ENCODE measurements at regions of chr21 and their contacts with region 1.

Region 1: DNA sequence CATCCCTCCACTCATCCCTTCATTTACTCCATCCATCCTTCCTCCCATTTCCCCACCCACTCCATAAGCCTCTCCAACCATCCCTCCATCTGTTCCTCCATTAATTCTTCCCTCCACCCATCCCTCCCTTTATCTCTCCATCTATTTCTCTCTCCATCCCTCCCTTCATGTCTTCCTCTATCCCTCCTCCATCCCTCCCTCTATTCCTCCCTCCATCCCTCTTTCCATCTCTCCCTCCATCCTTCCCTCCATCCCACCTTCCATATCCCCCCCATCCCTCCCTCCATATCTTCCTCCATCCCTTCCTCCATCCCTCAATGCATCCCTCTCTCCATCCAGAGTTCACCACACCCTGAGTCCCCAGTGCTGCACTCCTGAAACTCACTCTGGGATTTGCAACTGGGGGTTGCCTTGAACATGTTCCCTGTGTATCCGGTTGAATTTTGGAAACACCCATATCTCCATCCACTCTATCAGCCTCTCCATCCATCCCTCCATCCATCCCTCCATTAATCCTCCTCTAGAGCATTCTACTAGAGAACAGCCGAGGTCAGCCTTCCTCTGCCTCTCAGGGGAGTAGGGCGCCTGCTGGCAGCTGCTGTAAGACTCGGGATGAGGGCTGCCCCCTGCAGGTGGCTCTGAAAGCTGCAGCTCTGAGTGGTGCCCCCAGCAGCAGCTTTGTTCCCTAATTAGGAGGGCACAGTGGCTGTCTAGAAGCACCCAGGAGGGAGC is 39.4 kb downstream of the ABCG1 start:
- DNase-seq: peak; percentile 77 to 81 (median 78)
- H3K4me3 ChIP-seq: no peak overlapping the region
- H3K4me3 Mint-ChIP-seq: peak overlapping the region in 1 of 8 donors; percentile 37
- H3K27ac ChIP-seq: no peak overlapping the region
- H3K27ac Mint-ChIP-seq: peak overlapping the region in 6 of 7 donors; percentile 10 to 78 (median 48)
- H3K4me1 ChIP-seq: peaks cover 15% of the 10 kb centered on the region
- H3K4me1 Mint-ChIP-seq: peaks cover 19 to 40% (median 30%) of the 10 kb centered on the region in 4 donors
- H3K27me3 ChIP-seq: no peaks in the 10 kb centered on the region
- H3K27me3 Mint-ChIP-seq: no peaks in the 10 kb centered on the region

Region 2: GRCh38 chr21:42145569-42146272 is 112.6 kb before region 1 on chr21:
- CTCF ChIA-PET with region 1: interaction called, 217 read pairs
- POLR2A ChIA-PET with region 1: interaction called, 7 read pairs
- intact Hi-C with region 1: loop called (anchors 1 kb)
- DNase-seq: peak; percentile 67 to 72 (median 70)
- H3K4me3 ChIP-seq: no peak overlapping the region
- H3K4me3 Mint-ChIP-seq: peak overlapping the region in 1 of 8 donors; percentile 13
- H3K27ac ChIP-seq: no peak overlapping the region
- H3K27ac Mint-ChIP-seq: peak overlapping the region; percentile 28 to 89 (median 51)
- H3K4me1 ChIP-seq: peaks cover 4% of the 10 kb centered on the region
- H3K4me1 Mint-ChIP-seq: peaks cover 4 to 7% (median 5%) of the 10 kb centered on the region in 4 donors
- H3K27me3 ChIP-seq: no peaks in the 10 kb centered on the region
- H3K27me3 Mint-ChIP-seq: peaks cover 5 to 7% of the 10 kb centered on the region in 2 donors

Region 3: GRCh38 chr21:42156690-42157577 is 101.4 kb before region 1 on chr21:
- CTCF ChIA-PET with region 1: interaction called, 157 read pairs
- POLR2A ChIA-PET with region 1: no interaction called
- intact Hi-C with region 1: no loop called
- DNase-seq: no peak
- H3K4me3 ChIP-seq: no peak overlapping the region
- H3K4me3 Mint-ChIP-seq: no peak overlapping the region
- H3K27ac ChIP-seq: no peak overlapping the region
- H3K27ac Mint-ChIP-seq: no peak overlapping the region
- H3K4me1 ChIP-seq: peaks cover 7% of the 10 kb centered on the region
- H3K4me1 Mint-ChIP-seq: peaks cover 6 to 14% (median 11%) of the 10 kb centered on the region in 4 donors
- H3K27me3 ChIP-seq: no peaks in the 10 kb centered on the region
- H3K27me3 Mint-ChIP-seq: peaks cover 0 to 4% of the 10 kb centered on the region in 2 donors

Region 4: GRCh38 chr21:42187976-42188653 is 70.2 kb before region 1 on chr21:
- CTCF ChIA-PET with region 1: interaction called, 40 read pairs
- POLR2A ChIA-PET with region 1: interaction called, 6 read pairs
- intact Hi-C with region 1: loop called (anchors 1 kb)
- DNase-seq: peak; percentile 84 to 91 (median 86)
- H3K4me3 ChIP-seq: peak overlapping the region; percentile 2 to 10
- H3K4me3 Mint-ChIP-seq: peak overlapping the region; percentile 74 to 89 (median 79)
- H3K27ac ChIP-seq: peak overlapping the region; percentile 73
- H3K27ac Mint-ChIP-seq: peak overlapping the region; percentile 90 to 99 (median 98)
- H3K4me1 ChIP-seq: peaks cover 92% of the 10 kb centered on the region
- H3K4me1 Mint-ChIP-seq: peaks cover 34 to 74% (median 60%) of the 10 kb centered on the region in 4 donors
- H3K27me3 ChIP-seq: no peaks in the 10 kb centered on the region
- H3K27me3 Mint-ChIP-seq: no peaks in the 10 kb centered on the region

Region 5: DNA sequence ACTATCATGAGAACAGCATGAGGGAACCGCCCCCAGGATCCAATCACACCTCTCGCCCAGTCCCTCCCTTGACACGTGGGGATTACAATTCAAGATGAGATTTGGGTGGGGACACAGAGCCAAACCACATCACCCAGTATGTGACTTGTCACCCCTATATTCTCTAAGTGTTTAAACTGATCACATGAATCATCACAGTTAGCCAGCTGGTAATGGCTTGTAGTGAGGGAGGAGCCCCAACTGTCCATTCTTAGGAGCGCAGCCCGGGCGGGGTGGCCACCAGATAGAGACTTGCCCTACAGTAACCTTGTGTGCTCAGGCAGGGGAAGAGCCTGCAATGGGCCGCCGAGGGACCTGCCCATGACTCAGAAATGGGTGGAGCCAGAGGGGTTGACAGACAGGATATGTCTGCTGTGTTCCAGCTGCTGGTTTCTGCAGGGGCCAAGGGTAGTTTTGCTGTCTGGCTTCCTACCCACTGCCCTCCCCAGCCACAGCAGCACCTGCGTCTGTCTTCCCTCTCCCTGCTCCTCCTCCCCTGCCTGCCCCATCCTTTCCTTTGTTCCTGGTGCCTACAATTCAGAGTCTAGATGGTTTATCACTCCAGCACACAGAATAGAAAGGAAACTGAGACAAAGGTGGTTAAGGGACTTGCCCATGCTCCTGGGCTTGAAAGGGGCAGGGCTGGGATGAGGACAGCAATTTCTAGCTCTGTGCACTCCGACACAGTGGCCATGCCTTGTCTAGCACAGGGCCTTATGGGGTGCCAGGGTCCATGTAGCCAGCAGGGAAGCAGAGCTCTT is 30.2 kb before region 1 on chr21:
- CTCF ChIA-PET with region 1: interaction called, 14 read pairs
- POLR2A ChIA-PET with region 1: interaction called, 4 read pairs
- intact Hi-C with region 1: no loop called
- DNase-seq: peak; percentile 87 to 100 (median 90)
- H3K4me3 ChIP-seq: peak overlapping the region in 1 of 2 donors; percentile 17
- H3K4me3 Mint-ChIP-seq: peak overlapping the region; percentile 65 to 77 (median 70)
- H3K27ac ChIP-seq: peak overlapping the region; percentile 80
- H3K27ac Mint-ChIP-seq: peak overlapping the region; percentile 93 to 99 (median 98)
- H3K4me1 ChIP-seq: peaks cover 68% of the 10 kb centered on the region
- H3K4me1 Mint-ChIP-seq: peaks cover 40 to 90% (median 69%) of the 10 kb centered on the region in 4 donors
- H3K27me3 ChIP-seq: no peaks in the 10 kb centered on the region
- H3K27me3 Mint-ChIP-seq: no peaks in the 10 kb centered on the region

Region 6: GRCh38 chr21:42238185-42238934 is 20.0 kb before region 1 on chr21:
- CTCF ChIA-PET with region 1: interaction called, 55 read pairs
- POLR2A ChIA-PET with region 1: interaction called, 4 read pairs
- intact Hi-C with region 1: loop called (anchors 1 kb)
- DNase-seq: peak; percentile 77 to 89 (median 83)
- H3K4me3 ChIP-seq: peak overlapping the region in 1 of 2 donors; percentile 44
- H3K4me3 Mint-ChIP-seq: peak overlapping the region; percentile 49 to 88 (median 75)
- H3K27ac ChIP-seq: peak overlapping the region; percentile 96
- H3K27ac Mint-ChIP-seq: peak overlapping the region; percentile 88 to 99 (median 96)
- H3K4me1 ChIP-seq: peaks cover 66% of the 10 kb centered on the region
- H3K4me1 Mint-ChIP-seq: peaks cover 50 to 86% (median 59%) of the 10 kb centered on the region in 4 donors
- H3K27me3 ChIP-seq: no peaks in the 10 kb centered on the region
- H3K27me3 Mint-ChIP-seq: no peaks in the 10 kb centered on the region

Region 7: GRCh38 chr21:42411191-42411869 is 153.0 kb after region 1 on chr21:
- CTCF ChIA-PET with region 1: no interaction called
- POLR2A ChIA-PET with region 1: no interaction called
- intact Hi-C with region 1: no loop called
- DNase-seq: no peak
- H3K4me3 ChIP-seq: no peak overlapping the region
- H3K4me3 Mint-ChIP-seq: no peak overlapping the region
- H3K27ac ChIP-seq: peak overlapping the region; percentile 92
- H3K27ac Mint-ChIP-seq: no peak overlapping the region
- H3K4me1 ChIP-seq: peaks cover 98% of the 10 kb centered on the region
- H3K4me1 Mint-ChIP-seq: peaks cover 36 to 67% (median 54%) of the 10 kb centered on the region in 4 donors
- H3K27me3 ChIP-seq: no peaks in the 10 kb centered on the region
- H3K27me3 Mint-ChIP-seq: no peaks in the 10 kb centered on the region

Region 8: DNA sequence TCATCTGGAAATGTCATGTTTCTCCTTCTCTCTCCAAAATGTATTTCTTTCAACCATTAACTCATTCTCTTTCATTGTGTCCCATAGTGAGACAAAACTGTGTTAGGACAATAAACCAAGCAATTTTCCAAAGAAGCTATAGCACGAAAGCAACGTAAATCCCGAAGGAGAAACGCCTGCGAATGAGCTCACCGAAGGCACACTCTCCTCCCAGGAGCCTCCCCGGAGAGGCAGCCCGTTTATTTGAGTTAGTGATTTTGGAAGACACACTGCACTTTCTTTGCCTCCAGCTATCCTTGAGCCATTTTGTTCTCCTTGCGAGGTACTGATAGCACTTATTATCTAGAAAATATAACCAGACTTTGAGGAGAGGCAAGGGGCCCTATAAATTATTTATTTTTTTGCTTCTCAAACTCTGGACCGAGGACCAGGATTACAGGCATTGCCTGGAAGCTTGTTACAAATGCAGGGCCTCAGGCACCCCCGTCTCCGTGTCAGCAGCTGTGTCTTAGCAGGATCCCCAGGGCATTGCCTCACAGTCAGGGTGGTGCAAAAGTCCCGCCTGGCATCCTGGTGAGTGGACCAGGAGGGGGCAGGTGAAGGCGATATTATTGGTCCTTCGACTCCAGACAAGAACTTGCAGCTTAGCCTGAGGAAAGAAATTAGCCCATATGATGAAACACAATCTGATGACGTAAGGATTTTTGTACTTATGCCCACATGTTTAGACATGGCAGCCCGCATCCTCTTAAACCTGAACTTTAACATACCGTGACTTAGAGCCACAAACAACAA is 196.7 kb after region 1 on chr21:
- CTCF ChIA-PET with region 1: interaction called, 8 read pairs
- POLR2A ChIA-PET with region 1: no interaction called
- intact Hi-C with region 1: loop called (anchors 1 kb)
- DNase-seq: no peak
- H3K4me3 ChIP-seq: no peak overlapping the region
- H3K4me3 Mint-ChIP-seq: no peak overlapping the region
- H3K27ac ChIP-seq: no peak overlapping the region
- H3K27ac Mint-ChIP-seq: peak overlapping the region in 1 of 7 donors; percentile 69
- H3K4me1 ChIP-seq: peaks cover 24% of the 10 kb centered on the region
- H3K4me1 Mint-ChIP-seq: peaks cover 8 to 32% (median 21%) of the 10 kb centered on the region in 4 donors
- H3K27me3 ChIP-seq: no peaks in the 10 kb centered on the region
- H3K27me3 Mint-ChIP-seq: no peaks in the 10 kb centered on the region

Measured in CD4-positive, alpha-beta memory T cell (primary cell).